ENCODE measurements at regions of chr3 and their contacts with region 1.

Region 1: DNA sequence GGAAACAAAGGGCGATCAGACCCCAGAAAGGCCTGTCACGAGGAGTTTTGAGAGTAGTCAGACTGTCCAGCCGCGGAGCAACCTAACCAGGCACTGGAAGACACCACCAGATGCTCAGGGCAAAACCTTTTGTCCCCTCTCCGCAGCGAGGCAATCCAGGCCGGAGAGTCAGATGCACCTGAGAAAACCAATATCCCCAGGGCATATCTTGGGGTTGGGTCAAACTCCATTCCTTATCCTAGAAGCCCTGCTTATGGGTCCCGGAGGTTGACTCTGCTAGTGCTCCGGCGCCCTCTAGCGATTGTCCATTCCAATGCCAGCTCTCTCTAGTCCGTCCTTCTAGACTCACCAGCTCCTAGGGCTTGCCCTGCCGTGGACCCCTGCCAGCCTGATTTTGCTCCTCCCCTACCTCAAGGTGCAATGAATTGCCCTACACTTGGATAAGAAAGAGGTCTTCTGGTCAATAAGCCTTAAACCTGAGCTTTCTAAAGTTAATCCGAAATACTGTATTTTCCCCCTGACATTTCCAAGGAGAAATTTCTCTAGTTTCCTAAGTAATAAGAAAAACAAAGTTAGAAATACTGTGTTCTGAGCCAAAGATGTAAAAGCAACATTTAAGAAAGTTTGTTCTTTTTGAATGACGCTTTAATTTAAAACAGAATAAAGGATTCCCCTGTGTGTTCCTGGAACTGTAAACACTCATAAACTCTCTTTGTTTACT is 5.5 kb downstream of the CPNE4 start:
- DNase-seq: peak; percentile 24 to 42
- ATAC-seq: peak in 1 of 2 donors; percentile 42
- H3K4me3 ChIP-seq: no peak overlapping the region
- H3K27ac ChIP-seq: no peak overlapping the region
- H3K4me1 ChIP-seq: no peaks in the 10 kb centered on the region
- H3K27me3 ChIP-seq: peaks cover 11 to 17% (median 14%) of the 10 kb centered on the region in 3 donors
- CTCF ChIP-seq: peak; percentile 28 to 72 (median 46)
- POLR2A ChIP-seq: no peak

Region 2: DNA sequence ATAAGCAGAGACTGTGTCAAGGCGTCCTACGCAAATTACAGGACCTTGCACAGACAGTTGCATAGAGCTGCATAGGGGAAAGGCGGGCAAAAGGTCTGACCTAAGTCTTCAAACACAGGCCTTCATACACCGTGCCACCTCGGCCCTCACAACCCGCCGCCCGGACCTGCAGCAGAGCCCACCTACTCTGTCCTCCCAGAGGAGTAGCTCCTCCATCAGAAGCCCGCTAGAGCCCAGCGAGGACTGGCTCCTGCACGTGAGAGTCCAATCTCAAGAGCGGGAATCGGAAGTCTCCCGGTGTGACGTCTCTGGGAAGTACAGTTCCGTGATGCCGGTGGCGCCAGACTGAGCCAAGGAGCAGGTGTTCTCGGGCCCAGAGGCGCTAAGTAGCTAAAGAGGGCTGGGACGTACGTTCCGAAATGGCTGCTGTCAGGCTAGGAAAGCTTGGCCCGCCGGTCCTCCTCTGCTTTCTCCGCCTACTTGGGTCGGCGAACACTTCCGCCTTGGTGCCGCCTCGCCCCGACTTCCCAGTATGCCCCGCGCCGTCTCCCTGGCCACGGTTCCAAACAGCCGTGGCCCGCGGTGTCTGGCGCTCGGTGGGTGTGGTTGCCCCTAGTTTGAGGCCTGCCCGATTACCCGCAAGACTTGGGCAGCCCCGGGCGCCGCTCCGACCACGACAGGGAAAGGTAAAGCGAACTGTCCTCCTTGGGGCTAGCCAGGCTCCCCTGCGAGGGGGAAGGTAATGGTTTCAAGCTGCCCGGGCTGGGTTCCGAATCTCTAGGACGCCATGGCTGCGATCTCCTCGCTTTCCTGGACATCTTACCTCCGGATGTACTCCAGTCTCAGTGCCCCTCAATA is 1002.8 kb before region 1 on chr3 and contains the starts of genes ASTE1 and NEK11:
- in situ Hi-C with region 1: loop called in 1 of 4 experiments (anchors 25 kb)
- intact Hi-C with region 1: loop called (anchors 5 kb)
- DNase-seq: peak; percentile 75 to 76
- ATAC-seq: peak; percentile 96 to 97
- H3K4me3 ChIP-seq: peak within 1 kb of the TSS; percentile 68 to 85 (median 78)
- H3K27ac ChIP-seq: peak within 1 kb of the TSS; percentile 83 to 88 (median 84)
- H3K4me1 ChIP-seq: peaks cover 10 to 19% of the 10 kb centered on the region in 2 donors
- H3K27me3 ChIP-seq: no peaks in the 10 kb centered on the region
- CTCF ChIP-seq: no peak
- POLR2A ChIP-seq: peak in 1 of 2 donors; percentile 27
- total RNA-seq, gene ASTE1: 1.2 to 2.0 (median 1.5) TPM
- total RNA-seq, gene NEK11: 2.1 to 5.2 (median 2.5) TPM

Region 3: DNA sequence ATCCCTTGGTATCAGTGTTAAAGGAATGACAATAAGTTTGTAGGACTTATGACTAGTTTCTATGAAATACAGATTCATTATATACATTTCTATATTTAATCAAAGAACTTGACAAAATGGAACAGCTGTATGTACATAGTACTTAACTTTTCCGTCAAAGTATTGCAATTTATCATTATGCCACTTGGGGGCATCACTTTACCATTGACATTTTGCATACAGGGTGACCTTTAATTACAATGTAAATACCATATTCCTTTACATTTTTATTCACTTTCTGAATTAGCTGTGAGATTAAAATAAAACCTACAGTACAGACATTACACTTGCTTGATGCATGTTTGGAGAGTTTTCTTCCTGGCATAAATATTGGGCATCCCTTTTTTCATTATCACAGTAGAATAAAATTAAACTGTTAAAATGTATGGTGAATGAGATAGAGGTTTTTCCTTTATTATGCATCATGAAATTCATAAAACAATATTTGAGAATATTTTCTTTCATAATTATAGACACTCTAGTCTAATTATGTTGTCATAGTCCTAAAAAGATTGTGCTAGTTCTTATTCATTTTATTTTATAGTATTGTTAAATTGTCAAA is 995.8 kb before region 1 on chr3:
- in situ Hi-C with region 1: loop called in 1 of 4 experiments (anchors 25 kb)
- intact Hi-C with region 1: loop called (anchors 5 kb)
- DNase-seq: no peak
- ATAC-seq: no peak
- H3K4me3 ChIP-seq: no peak overlapping the region
- H3K27ac ChIP-seq: no peak overlapping the region
- H3K4me1 ChIP-seq: no peaks in the 10 kb centered on the region
- H3K27me3 ChIP-seq: no peaks in the 10 kb centered on the region
- CTCF ChIP-seq: peak in 4 of 5 experiments; percentile 29 to 53 (median 40)
- POLR2A ChIP-seq: no peak

Region 4: GRCh38 chr3:131794766-131795388 is 234.5 kb before region 1 on chr3:
- in situ Hi-C with region 1: loop called in 1 of 4 experiments (anchors 10 kb)
- intact Hi-C with region 1: no loop called
- DNase-seq: no peak
- ATAC-seq: peak in 1 of 2 donors; percentile 54
- H3K4me3 ChIP-seq: no peak overlapping the region
- H3K27ac ChIP-seq: no peak overlapping the region
- H3K4me1 ChIP-seq: no peaks in the 10 kb centered on the region
- H3K27me3 ChIP-seq: no peaks in the 10 kb centered on the region
- CTCF ChIP-seq: peak in 3 of 5 experiments; percentile 42 to 62 (median 53)
- POLR2A ChIP-seq: no peak

Region 5: GRCh38 chr3:131840156-131840797 is 189.1 kb before region 1 on chr3:
- in situ Hi-C with region 1: no loop called
- intact Hi-C with region 1: no loop called
- DNase-seq: no peak
- ATAC-seq: no peak
- H3K4me3 ChIP-seq: no peak overlapping the region
- H3K27ac ChIP-seq: no peak overlapping the region
- H3K4me1 ChIP-seq: no peaks in the 10 kb centered on the region
- H3K27me3 ChIP-seq: no peaks in the 10 kb centered on the region
- CTCF ChIP-seq: no peak
- POLR2A ChIP-seq: no peak

Measured in gastrocnemius medialis (tissue), 4 donors.